GM12878 (cell line): ENCODE measurements at regions of chr7 and their contacts with region 1.

Region 1: DNA sequence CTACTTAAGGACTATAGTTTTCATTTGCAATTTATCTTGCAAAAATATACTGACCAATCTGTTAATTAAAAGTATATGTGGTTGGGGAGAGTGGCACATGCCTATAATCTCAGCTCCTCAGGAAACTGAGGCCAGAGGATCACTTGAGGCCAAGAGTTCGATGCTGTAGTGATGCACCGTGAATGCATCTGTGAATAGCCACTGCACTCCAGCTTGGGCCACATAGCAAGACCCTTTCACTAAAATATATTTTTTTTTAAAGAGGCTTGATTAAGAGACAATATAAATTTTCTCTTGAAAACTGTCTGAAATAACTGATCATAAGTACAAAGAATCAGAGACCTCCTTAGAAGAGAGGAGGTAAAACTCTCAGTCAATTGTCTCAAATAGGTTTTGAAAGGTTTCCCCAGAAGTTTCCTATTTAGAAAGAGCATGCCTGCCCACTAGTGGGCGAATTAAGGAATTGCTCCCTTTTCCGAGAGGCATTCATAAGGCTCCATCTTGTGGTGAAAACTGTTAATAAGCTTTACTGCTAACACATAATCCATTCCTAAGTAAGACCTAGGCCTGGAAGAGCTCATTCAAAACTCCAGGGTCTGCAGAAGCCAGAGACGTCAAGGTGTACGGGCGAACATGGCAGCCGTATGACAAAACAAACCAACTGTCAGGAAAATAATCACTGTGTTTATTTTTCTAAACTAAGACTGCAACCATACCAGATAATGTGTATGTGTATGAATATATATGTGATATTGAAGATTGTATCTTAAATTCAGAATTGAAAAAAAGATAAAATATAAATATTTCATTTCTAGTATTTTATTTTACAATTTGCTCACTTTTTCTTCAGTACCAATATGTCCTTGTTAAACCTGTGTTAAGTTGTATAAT is 6.8 kb upstream of the TAS2R40 start:
- DNase-seq: peak; percentile 50
- ATAC-seq: peak; percentile 91
- H3K4me3 ChIP-seq: no peak overlapping the region
- H3K27ac ChIP-seq: no peak overlapping the region
- H3K4me1 ChIP-seq: no peaks in the 10 kb centered on the region
- H3K27me3 ChIP-seq: no peaks in the 10 kb centered on the region; a peak in 2 of 4 replicates
- CTCF ChIP-seq: peak; percentile 97 to 100 (median 100); a peak in 5 of 6 replicates
- EP300 ChIP-seq: no peak
- POLR2A ChIP-seq: no peak
- RAD21 ChIP-seq: peak; percentile 100

Region 2: DNA sequence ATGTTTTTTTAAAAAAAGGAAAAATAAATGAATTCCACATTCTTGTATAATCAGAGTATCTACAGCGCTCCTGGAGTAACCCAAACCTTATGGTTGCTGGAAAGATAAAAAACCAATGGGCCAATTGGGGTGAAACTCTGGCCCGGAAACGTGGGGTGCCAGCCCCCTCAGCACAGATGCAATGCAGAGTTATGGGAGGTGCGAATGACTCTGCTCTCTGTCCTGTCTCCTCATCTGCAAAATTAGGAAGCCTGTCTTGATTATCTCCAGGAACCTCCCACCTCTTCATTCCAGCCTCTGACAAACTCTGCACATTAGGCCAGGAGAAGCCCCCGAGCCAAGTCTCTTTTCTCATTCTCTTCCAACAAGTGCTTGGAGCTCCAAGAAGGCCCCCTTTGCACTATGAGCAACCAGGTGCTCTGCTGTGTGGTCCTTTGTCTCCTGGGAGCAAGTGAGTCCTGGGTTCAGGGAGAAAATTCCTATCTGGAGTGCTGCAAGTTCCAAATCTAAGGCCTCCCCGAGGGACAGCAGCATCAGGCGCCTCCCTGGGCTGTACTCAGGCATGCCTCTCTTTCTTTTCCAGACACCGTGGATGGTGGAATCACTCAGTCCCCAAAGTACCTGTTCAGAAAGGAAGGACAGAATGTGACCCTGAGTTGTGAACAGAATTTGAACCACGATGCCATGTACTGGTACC is 596.2 kb before region 1 on chr7:
- CTCF ChIA-PET with region 1: no interaction called
- POLR2A ChIA-PET with region 1: no interaction called
- RAD21 ChIA-PET with region 1: no interaction called
- SMC1A ChIA-PET with region 1: no interaction called
- in situ Hi-C with region 1: no loop called
- intact Hi-C with region 1: no loop called
- DNase-seq: no peak
- ATAC-seq: no peak
- H3K4me3 ChIP-seq: no peak overlapping the region
- H3K27ac ChIP-seq: no peak overlapping the region
- H3K4me1 ChIP-seq: no peaks in the 10 kb centered on the region
- H3K27me3 ChIP-seq: peaks cover 0 to 4% of the 10 kb centered on the region in 2 experiments; a peak in 2 of 4 replicates
- CTCF ChIP-seq: no peak
- EP300 ChIP-seq: no peak
- POLR2A ChIP-seq: no peak
- RAD21 ChIP-seq: no peak

Region 3: DNA sequence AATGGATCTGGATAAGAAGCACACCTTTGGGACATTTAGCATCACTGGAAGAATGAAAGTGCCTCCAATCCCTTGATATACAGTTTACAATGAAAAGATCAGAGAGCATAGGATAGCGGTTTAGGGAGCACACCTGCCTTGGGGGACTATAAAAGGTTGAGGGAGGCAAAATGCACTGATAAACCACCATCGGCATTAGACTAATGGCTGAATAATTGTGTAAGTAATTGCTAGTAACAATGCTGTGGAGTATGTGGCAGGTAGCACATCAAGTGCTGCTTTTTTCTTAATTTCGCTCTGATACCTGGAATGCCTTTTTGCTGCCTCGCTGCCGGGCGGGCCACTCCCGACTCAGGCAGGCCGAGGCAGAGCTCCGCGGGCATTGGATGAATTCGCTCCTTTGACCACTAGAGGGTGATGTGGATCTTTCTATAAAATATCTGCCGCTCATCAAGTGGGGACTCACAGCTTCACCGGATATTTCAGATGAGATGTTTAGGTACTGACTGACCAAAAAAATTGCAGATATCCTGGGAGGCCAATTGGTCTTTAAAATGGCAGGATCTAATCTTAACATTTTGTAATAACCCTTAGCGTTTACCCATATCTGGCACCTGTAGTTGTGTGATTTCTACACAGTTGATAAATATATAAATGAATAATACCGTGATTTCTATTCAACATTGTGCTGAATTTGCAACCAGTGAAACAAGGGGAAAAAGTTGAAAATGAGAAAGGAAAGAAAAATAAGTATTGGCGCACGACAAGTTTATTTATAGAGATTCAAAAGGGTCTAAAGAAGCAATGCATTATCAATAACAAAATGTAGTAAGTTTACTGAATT is 582.5 kb before region 1 on chr7:
- CTCF ChIA-PET with region 1: interaction called, 5 read pairs
- POLR2A ChIA-PET with region 1: no interaction called
- RAD21 ChIA-PET with region 1: interaction called, 8 read pairs
- SMC1A ChIA-PET with region 1: interaction called, 7 read pairs
- in situ Hi-C with region 1: loop called (anchors 10 kb)
- intact Hi-C with region 1: loop called (anchors 5 kb)
- DNase-seq: peak; percentile 32
- ATAC-seq: peak; percentile 100
- H3K4me3 ChIP-seq: no peak overlapping the region
- H3K27ac ChIP-seq: no peak overlapping the region
- H3K4me1 ChIP-seq: no peaks in the 10 kb centered on the region
- H3K27me3 ChIP-seq: peaks cover 0 to 1% of the 10 kb centered on the region in 2 experiments; a peak in 1 of 4 replicates
- CTCF ChIP-seq: peak; percentile 73 to 86 (median 82)
- EP300 ChIP-seq: no peak
- POLR2A ChIP-seq: no peak
- RAD21 ChIP-seq: peak; percentile 81

Region 4: DNA sequence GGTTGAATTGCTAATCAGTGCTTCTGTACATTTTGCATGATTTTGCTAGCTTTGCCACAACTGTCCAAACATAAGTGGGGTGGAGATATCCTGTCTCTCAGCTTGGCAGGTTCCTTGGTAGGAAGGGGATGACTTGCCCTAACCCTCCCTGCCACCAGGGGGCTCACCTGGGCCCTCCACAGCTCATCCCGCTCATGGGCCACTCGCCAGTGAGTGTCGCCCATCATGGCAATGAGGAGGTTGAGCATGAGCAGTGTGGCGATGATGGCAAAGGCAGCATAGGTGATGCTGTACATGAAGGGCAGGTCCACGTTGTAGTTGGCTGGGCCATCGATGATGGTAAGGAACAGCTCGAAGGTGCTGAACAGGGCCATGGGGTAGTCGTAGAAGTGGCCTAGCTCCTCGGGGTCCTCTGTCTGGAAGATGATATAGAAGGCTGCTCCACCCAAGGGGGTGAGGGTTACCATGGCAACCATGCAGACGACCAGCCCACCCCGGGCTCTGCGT is 341.7 kb before region 1 on chr7:
- CTCF ChIA-PET with region 1: interaction called, 18 read pairs
- POLR2A ChIA-PET with region 1: no interaction called
- RAD21 ChIA-PET with region 1: interaction called, 9 read pairs
- SMC1A ChIA-PET with region 1: interaction called, 5 read pairs
- in situ Hi-C with region 1: loop called (anchors 10 kb)
- intact Hi-C with region 1: no loop called
- DNase-seq: no peak
- ATAC-seq: peak; percentile 93
- H3K4me3 ChIP-seq: no peak overlapping the region
- H3K27ac ChIP-seq: no peak overlapping the region
- H3K4me1 ChIP-seq: no peaks in the 10 kb centered on the region
- H3K27me3 ChIP-seq: no peaks in the 10 kb centered on the region
- CTCF ChIP-seq: peak; percentile 52 to 81 (median 76)
- EP300 ChIP-seq: no peak
- POLR2A ChIP-seq: no peak
- RAD21 ChIP-seq: peak; percentile 28; the same call in 1 of the 2 replicates

Region 5: DNA sequence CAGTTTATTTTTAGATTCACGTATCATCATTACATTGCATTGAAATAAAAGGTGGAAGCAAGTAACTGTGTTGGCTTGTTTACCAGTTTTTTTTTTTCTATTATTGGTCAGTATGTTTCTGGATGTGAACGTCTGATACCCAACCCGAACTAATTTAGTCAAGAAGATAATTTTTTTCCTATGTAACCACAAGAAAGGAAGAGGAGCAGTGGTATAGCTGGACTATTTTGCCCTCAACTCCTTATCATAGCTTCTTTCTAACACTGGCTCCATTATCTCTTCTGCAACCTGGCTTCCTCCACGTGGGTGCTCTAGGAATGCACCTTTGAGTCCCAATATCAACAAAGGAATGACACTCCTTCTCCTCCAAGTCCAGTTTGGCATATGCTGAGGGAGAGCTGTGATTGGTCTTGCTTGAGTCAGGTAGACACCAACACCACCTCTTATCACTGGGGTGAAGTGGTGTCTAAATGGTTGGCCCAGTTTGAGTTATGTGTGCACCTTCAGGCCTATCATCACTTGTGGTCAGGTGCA is 217.5 kb before region 1 on chr7:
- CTCF ChIA-PET with region 1: interaction called, 434 read pairs
- POLR2A ChIA-PET with region 1: interaction called, 3 read pairs
- RAD21 ChIA-PET with region 1: interaction called, 18 read pairs
- SMC1A ChIA-PET with region 1: interaction called, 191 read pairs
- in situ Hi-C with region 1: no loop called
- intact Hi-C with region 1: no loop called
- DNase-seq: no peak
- ATAC-seq: no peak
- H3K4me3 ChIP-seq: no peak overlapping the region
- H3K27ac ChIP-seq: no peak overlapping the region
- H3K4me1 ChIP-seq: no peaks in the 10 kb centered on the region
- H3K27me3 ChIP-seq: no peaks in the 10 kb centered on the region
- CTCF ChIP-seq: no peak
- EP300 ChIP-seq: no peak
- POLR2A ChIP-seq: no peak
- RAD21 ChIP-seq: no peak

Region 6: GRCh38 chr7:143148651-143149050 is 66.4 kb before region 1 on chr7:
- CTCF ChIA-PET with region 1: no interaction called
- POLR2A ChIA-PET with region 1: no interaction called
- RAD21 ChIA-PET with region 1: no interaction called
- SMC1A ChIA-PET with region 1: no interaction called
- in situ Hi-C with region 1: no loop called
- intact Hi-C with region 1: no loop called
- DNase-seq: no peak
- ATAC-seq: no peak
- H3K4me3 ChIP-seq: no peak overlapping the region
- H3K27ac ChIP-seq: no peak overlapping the region
- H3K4me1 ChIP-seq: no peaks in the 10 kb centered on the region
- H3K27me3 ChIP-seq: no peaks in the 10 kb centered on the region; a peak in 1 of 4 replicates
- CTCF ChIP-seq: no peak
- EP300 ChIP-seq: no peak
- POLR2A ChIP-seq: no peak
- RAD21 ChIP-seq: no peak